ENCODE measurements at regions of chr17 and their contacts with region 1.

Region 1: DNA sequence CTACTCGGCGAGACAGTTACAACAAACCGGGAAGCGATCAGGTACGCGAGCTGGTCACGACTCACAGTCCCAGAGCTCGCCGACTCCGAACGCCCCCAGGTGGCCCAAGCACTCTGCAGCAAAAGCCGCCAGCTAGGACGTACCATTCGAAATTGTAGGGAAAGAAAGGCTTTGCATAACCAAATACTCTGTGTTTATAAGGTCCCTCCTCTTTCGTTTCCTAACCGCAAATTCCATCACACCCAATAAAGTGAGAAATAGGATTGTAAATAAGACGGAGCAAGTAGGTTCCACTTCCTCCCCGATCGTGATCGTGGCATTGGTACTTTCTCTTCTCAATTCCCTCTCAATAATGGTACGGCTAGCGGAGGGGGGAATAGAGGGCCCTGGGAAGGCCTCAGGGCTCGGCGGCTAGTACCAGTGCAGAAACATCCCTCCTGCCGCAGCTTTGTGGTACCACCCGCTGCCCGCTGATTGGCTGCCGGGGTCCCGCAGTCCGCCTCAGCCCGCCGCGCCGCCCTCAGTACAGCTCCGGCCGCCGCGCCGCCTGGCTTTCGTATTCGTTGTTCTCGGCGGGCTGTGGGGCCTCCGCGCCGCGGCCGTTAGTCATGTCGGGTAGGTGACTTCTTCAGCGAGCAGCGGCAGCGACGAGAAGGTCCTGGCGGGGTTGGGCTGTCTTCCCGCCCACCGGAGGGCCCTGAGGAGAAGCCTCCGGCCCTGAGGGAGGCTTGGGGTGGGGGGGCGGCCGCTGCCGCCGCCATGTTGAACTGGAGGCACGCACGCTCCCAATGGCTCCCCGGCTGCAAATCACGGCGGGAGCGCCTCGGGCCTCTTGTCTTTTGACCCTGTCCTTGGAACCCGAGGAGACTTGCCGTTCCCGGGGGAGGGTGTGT is at the start of gene TAF15:
- DNase-seq: peak; percentile 96 to 100 (median 98)

Region 2: DNA sequence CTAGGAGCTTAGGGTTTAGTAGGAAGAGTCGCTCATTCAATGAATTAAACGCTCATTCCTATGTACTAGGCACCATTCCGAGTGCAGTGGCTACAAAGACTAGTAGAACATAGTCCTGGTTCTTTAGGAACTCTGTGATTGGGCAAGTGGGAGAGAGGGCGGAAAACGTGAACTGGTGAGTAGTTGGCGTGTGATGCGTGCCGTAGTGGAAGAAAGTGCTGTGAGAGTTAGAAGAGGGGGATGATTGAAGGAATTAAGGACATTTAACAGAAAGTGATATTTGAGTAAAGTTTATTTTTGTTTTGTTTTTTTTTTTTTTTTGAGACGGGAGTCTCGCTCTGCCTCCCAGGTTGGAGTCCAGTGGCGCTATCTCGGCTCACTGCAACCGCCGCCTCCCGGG is 240.7 kb before region 1 on chr17:
- intact Hi-C with region 1: loop called (anchors 5 kb)
- DNase-seq: no peak

Region 3: DNA sequence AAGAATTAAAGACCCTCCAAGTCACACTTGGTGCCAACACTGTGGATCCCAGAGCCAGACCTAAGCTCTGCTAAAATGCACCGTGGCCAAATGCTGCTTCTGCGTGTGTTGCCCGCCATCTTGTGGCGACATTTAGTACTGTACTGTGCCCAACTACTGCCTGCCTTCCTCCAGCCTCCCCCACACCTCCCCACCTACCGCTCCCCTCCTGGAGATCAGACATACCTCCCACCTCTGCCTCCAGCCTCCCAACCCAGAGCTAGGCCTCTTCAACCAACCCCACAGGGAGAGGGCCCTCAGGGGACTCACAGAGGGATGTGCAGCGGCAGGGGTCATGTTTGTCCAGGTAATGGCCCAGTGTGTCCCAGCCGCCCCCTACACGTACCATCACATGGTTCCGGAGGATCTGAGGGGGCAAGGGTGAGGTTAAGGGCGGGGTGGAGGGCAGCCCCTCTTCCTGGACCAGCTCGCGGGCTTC is 61.6 kb before region 1 on chr17:
- intact Hi-C with region 1: no loop called
- DNase-seq: peak; percentile 60 to 96 (median 80)

Region 4: GRCh38 chr17:35764123-35764991 is 44.9 kb before region 1 on chr17:
- intact Hi-C with region 1: loop called (anchors 1 kb)
- DNase-seq: peak; percentile 73 to 98 (median 84)

Measured in posterior cingulate gyrus (tissue), 11 donors.